ENCODE measurements at regions of chr11 and their contacts with region 1.

Region 1: DNA sequence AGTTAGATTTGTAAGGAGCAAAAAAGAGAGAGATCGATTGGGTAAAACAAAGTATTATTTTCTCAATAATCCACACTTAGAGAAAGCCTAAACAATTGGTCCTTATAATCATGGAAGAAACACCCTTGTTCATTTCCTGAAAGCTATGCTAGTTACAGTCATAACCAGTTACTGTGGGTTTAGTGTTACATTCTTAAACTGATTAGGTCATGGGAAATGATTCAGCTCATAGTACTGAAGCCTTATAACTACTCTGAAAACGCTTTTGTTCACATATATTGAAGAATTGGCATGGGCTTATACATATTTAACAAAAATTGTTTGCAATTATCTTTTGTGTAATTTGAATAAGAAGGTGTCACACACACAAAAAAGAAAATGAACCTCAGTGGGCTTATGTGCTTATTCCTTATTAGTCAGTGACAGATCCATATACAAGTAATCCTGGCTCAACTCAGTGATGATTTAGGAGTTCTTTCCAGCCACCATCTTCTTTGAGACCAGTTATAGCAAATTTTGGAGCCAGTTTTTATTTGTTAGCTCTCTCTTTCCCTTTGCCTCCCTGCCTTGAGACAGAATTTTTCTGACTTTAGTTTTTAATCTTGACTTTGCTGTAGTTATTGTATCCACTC is 198.5 kb upstream of the CTSC start:
- DNase-seq: no peak
- ATAC-seq: peak; percentile 100
- H3K4me3 Mint-ChIP-seq: no peak overlapping the region
- H3K27ac Mint-ChIP-seq: peak overlapping the region; percentile 42
- H3K4me1 Mint-ChIP-seq: peaks cover 21% of the 10 kb centered on the region
- H3K27me3 Mint-ChIP-seq: peaks cover 10% of the 10 kb centered on the region

Region 2: DNA sequence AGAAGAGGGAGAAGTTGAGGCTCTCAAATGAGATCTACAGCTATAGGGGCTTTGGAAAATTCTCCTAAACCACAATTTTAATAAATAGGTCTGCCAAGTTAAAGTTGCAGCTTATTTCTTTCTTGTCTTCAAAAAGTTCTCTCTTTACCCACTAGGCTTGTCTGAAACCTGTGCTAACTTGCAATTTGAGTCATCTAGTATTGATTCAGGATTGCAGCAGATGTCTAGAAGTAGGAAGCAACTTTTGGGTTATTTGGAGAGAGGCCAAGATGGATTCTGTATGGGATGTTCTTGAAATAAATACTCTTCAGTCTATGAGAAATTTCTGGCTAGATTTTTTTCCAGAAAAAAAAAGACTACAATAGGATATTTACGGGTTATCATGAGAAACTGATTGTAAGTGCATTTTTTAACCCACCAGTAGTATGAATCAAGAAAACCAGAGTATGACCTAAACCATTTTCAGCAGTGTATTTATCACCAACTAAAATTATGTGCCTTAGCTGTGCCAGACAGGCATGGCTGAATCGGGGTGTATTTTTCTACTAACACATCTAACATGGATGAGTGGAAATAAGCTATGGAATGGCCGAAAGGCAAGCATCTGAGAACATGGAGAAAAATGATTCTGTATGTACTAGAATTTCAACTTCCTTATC is 355.9 kb before region 1 on chr11:
- CTCF ChIA-PET with region 1: interaction called, 5 read pairs
- POLR2A ChIA-PET with region 1: no interaction called
- intact Hi-C with region 1: loop called (anchors 1 to 5 kb)
- DNase-seq: peak; percentile 8
- ATAC-seq: peak; percentile 48
- H3K4me3 Mint-ChIP-seq: peak overlapping the region; percentile 6
- H3K27ac Mint-ChIP-seq: peak overlapping the region; percentile 62
- H3K4me1 Mint-ChIP-seq: peaks cover 35% of the 10 kb centered on the region
- H3K27me3 Mint-ChIP-seq: peaks cover 32% of the 10 kb centered on the region

Region 3: GRCh38 chr11:88337181-88337986 is 198.6 kb before region 1 on chr11 and contains the start of gene CTSC:
- CTCF ChIA-PET with region 1: no interaction called
- POLR2A ChIA-PET with region 1: interaction called, 5 read pairs
- intact Hi-C with region 1: loop called (anchors 2 to 5 kb)
- DNase-seq: peak; percentile 97
- ATAC-seq: peak; percentile 78
- H3K4me3 Mint-ChIP-seq: peak within 1 kb of the TSS; percentile 99
- H3K27ac Mint-ChIP-seq: peak within 1 kb of the TSS; percentile 89
- H3K4me1 Mint-ChIP-seq: peaks cover 47% of the 10 kb centered on the region
- H3K27me3 Mint-ChIP-seq: no peaks in the 10 kb centered on the region
- total RNA-seq, gene CTSC: 53.1 to 59.4 TPM

Region 4: GRCh38 chr11:88357323-88358039 is 178.6 kb before region 1 on chr11:
- CTCF ChIA-PET with region 1: no interaction called
- POLR2A ChIA-PET with region 1: no interaction called
- intact Hi-C with region 1: loop called (anchors 1 kb)
- DNase-seq: no peak
- ATAC-seq: peak; percentile 86
- H3K4me3 Mint-ChIP-seq: no peak overlapping the region
- H3K27ac Mint-ChIP-seq: peak overlapping the region; percentile 69
- H3K4me1 Mint-ChIP-seq: peaks cover 52% of the 10 kb centered on the region
- H3K27me3 Mint-ChIP-seq: no peaks in the 10 kb centered on the region

Region 5: GRCh38 chr11:88421530-88421929 is 114.5 kb before region 1 on chr11:
- CTCF ChIA-PET with region 1: no interaction called
- POLR2A ChIA-PET with region 1: no interaction called
- intact Hi-C with region 1: loop called (anchors 1 to 2 kb)
- DNase-seq: peak; percentile 69
- ATAC-seq: peak; percentile 93
- H3K4me3 Mint-ChIP-seq: no peak overlapping the region
- H3K27ac Mint-ChIP-seq: peak overlapping the region; percentile 91
- H3K4me1 Mint-ChIP-seq: peaks cover 62% of the 10 kb centered on the region
- H3K27me3 Mint-ChIP-seq: no peaks in the 10 kb centered on the region

Region 6: DNA sequence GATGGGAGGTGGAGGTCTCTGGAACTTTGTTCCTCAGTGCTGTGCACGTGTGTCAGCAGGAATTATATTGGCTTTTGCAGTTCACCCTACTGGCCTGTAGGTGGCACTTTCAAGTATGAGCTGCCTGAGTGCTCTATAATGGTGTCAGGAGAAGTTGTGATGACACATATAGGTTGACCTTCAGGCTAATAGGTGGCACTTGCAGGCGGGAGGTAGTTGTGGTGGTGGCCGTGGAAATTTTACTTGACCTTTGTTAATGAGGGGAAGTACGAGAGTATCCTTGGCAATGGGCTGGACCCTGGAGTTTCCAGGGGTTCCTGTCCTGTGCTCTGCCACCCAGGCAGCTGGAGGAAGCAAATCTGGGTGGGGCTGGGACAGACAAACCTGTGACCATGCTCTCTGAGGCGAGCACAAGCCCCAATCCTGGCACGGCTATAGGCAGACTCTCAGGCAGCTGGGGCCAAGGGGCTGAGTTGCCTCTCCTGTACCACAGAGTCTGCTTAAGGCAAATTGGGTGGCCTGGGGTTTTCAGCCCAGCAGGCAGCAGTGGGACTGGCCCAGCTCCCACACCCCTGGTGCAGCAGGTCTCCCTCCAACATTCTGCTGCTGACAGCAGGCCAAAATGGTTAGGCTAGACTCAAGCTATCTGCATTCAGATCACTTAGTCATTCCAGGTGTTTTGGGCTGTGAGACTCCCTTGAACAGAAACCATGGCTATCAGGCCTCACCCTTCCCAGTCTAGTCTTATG is 51.0 kb before region 1 on chr11:
- CTCF ChIA-PET with region 1: interaction called, 3 read pairs
- POLR2A ChIA-PET with region 1: no interaction called
- intact Hi-C with region 1: loop called in 1 of 2 experiments (anchors 2 kb)
- DNase-seq: peak; percentile 41
- ATAC-seq: peak; percentile 87
- H3K4me3 Mint-ChIP-seq: no peak overlapping the region
- H3K27ac Mint-ChIP-seq: no peak overlapping the region
- H3K4me1 Mint-ChIP-seq: peaks cover 13% of the 10 kb centered on the region
- H3K27me3 Mint-ChIP-seq: no peaks in the 10 kb centered on the region

Region 7: DNA sequence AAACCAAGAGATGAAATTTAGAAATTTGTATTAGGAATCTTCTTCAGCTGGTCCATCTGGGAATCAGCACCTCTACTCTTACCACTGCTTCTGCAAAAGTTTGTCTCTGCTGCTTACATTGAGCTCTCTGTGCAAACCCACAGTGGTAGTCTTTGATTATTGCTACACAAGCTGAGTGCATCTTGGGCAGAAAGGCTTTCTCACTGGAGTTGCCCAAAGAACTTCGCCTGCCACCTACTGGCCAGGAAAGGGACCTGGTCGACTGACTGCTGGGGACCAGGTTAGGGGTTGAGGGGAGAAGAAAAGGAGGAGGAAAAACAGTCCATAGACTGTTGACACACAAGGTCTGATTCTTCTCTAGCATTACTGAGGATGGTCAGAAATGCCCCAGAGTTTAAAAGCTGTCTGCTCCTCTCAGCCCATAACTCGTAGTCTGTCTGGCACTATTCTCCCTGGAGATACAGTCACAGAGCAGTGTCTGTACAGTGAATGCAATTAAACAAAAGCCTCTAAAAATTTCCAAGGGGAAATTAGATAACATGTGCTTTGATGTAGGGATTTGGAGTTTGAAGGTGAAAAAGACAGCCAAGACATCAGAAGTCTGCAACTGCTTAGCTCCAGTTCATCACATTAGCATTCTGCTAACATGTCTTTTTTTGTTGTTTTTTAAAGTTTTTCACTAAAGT is 16.5 kb after region 1 on chr11:
- CTCF ChIA-PET with region 1: interaction called, 21 read pairs
- POLR2A ChIA-PET with region 1: no interaction called
- intact Hi-C with region 1: no loop called
- DNase-seq: peak; percentile 79
- ATAC-seq: peak; percentile 82
- H3K4me3 Mint-ChIP-seq: no peak overlapping the region
- H3K27ac Mint-ChIP-seq: no peak overlapping the region
- H3K4me1 Mint-ChIP-seq: peaks cover 4% of the 10 kb centered on the region
- H3K27me3 Mint-ChIP-seq: no peaks in the 10 kb centered on the region

Measured in activated CD4-positive, alpha-beta T cell treated with anti-CD3 and anti-CD28 coated beads for 36 hours (primary cell).